GM12878 (cell line): ENCODE measurements at regions of chr3 and their contacts with region 1.

Region 1: GRCh38 chr3:122679085-122679881 is 1.4 kb upstream of the PARP14 start:
- DNase-seq: no peak
- ATAC-seq: peak; percentile 70
- H3K4me3 ChIP-seq: peak overlapping the region; percentile 97
- H3K27ac ChIP-seq: peak overlapping the region; percentile 97
- H3K4me1 ChIP-seq: peaks cover 16% of the 10 kb centered on the region
- H3K27me3 ChIP-seq: no peaks in the 10 kb centered on the region
- CTCF ChIP-seq: peak; percentile 75 to 91 (median 80)
- EP300 ChIP-seq: peak in 1 of 2 experiments; percentile 6; a peak in 1 of 4 replicates
- POLR2A ChIP-seq: no peak
- RAD21 ChIP-seq: peak; percentile 95

Region 2: GRCh38 chr3:121545574-121546455 is 1133.5 kb before region 1 on chr3 and contains the start of gene POLQ:
- CTCF ChIA-PET with region 1: no interaction called
- POLR2A ChIA-PET with region 1: no interaction called
- RAD21 ChIA-PET with region 1: interaction called, 9 read pairs
- SMC1A ChIA-PET with region 1: no interaction called
- in situ Hi-C with region 1: loop called (anchors 5 kb)
- intact Hi-C with region 1: loop called (anchors 2 kb)
- DNase-seq: peak; percentile 77
- ATAC-seq: peak; percentile 82
- H3K4me3 ChIP-seq: peak within 1 kb of the TSS; percentile 76
- H3K27ac ChIP-seq: peak within 1 kb of the TSS; percentile 84
- H3K4me1 ChIP-seq: peaks cover 16% of the 10 kb centered on the region
- H3K27me3 ChIP-seq: no peaks in the 10 kb centered on the region
- CTCF ChIP-seq: no peak
- EP300 ChIP-seq: 0 out of 4 replicates have a peak, but pooled peaks of 1 of the 2 experiments have one; percentile 18
- POLR2A ChIP-seq: peak; percentile 83
- RAD21 ChIP-seq: no peak
- polyA plus RNA-seq, gene POLQ: 3.3 to 3.4 TPM

Region 3: GRCh38 chr3:122392868-122393844 is 286.1 kb before region 1 on chr3:
- CTCF ChIA-PET with region 1: interaction called, 37 read pairs
- POLR2A ChIA-PET with region 1: interaction called, 4 read pairs
- RAD21 ChIA-PET with region 1: interaction called, 19 read pairs
- SMC1A ChIA-PET with region 1: interaction called, 15 read pairs
- in situ Hi-C with region 1: no loop called
- intact Hi-C with region 1: loop called (anchors 1 kb)
- DNase-seq: no peak
- ATAC-seq: peak; percentile 59
- H3K4me3 ChIP-seq: no peak overlapping the region
- H3K27ac ChIP-seq: no peak overlapping the region
- H3K4me1 ChIP-seq: no peaks in the 10 kb centered on the region; the same call in 1 of the 2 replicates
- H3K27me3 ChIP-seq: no peaks in the 10 kb centered on the region
- CTCF ChIP-seq: peak; percentile 52 to 77 (median 75); a peak in 5 of 6 replicates
- EP300 ChIP-seq: no peak
- POLR2A ChIP-seq: no peak
- RAD21 ChIP-seq: peak; percentile 88

Region 4: GRCh38 chr3:122468896-122469533 is 210.3 kb before region 1 on chr3:
- CTCF ChIA-PET with region 1: interaction called, 9 read pairs
- POLR2A ChIA-PET with region 1: interaction called, 3 read pairs
- RAD21 ChIA-PET with region 1: interaction called, 4 read pairs
- SMC1A ChIA-PET with region 1: interaction called, 12 read pairs
- in situ Hi-C with region 1: no loop called
- intact Hi-C with region 1: loop called (anchors 5 kb)
- DNase-seq: peak; percentile 30
- ATAC-seq: peak; percentile 88
- H3K4me3 ChIP-seq: no peak overlapping the region
- H3K27ac ChIP-seq: peak overlapping the region; percentile 53
- H3K4me1 ChIP-seq: peaks cover 16% of the 10 kb centered on the region
- H3K27me3 ChIP-seq: no peaks in the 10 kb centered on the region
- CTCF ChIP-seq: no peak
- EP300 ChIP-seq: no peak; a peak in 1 of 4 replicates
- POLR2A ChIP-seq: no peak
- RAD21 ChIP-seq: no peak

Region 5: DNA sequence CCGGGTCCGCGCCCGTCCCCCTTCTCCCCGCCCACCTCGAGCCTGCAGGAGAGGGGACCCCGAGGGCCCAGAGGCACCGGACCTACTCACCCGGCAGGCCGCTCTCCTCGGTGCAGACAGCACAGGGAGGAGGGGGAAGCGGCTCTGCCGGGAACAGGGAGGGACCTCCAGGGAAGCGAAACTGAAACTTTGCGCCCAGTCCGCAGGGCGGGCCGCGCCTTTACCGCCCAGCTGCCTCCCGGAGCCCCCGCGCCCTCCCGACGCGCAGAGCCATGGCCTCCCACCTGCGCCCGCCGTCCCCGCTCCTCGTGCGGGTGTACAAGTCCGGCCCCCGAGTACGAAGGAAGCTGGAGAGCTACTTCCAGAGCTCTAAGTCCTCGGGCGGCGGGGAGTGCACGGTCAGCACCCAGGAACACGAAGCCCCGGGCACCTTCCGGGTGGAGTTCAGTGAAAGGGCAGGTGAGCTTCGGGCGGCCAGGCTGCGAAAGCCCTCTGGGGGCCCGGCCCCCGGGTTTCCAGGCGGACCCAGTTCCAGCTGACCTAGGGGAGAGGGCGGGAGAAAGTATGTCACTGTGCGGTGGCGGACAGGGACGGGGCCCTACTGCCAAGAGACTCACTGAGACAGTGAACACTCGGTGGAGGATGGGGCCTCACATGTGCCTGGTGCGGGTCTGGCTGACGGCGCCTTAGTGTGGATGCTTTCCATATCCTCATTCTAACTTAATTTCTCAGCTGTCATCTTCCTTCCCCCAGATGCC is 114.9 kb before region 1 on chr3 and contains the starts of genes DTX3L and PARP9:
- CTCF ChIA-PET with region 1: interaction called, 192 read pairs
- POLR2A ChIA-PET with region 1: interaction called, 65 read pairs
- RAD21 ChIA-PET with region 1: interaction called, 236 read pairs
- SMC1A ChIA-PET with region 1: interaction called, 250 read pairs
- in situ Hi-C with region 1: loop called (anchors 5 kb)
- intact Hi-C with region 1: loop called (anchors 1 kb)
- DNase-seq: no peak
- ATAC-seq: peak; percentile 82
- H3K4me3 ChIP-seq: peak within 1 kb of the TSS; percentile 57
- H3K27ac ChIP-seq: peak within 1 kb of the TSS; percentile 82
- H3K4me1 ChIP-seq: peaks cover 4% of the 10 kb centered on the region; the same call in 1 of the 2 replicates
- H3K27me3 ChIP-seq: no peaks in the 10 kb centered on the region
- CTCF ChIP-seq: no peak
- EP300 ChIP-seq: no peak
- POLR2A ChIP-seq: peak; percentile 83
- RAD21 ChIP-seq: no peak
- polyA plus RNA-seq, gene DTX3L: 9.9 to 14.6 TPM
- polyA plus RNA-seq, gene PARP9: 34.0 to 40.4 TPM

Region 6: GRCh38 chr3:122621112-122621511 is 58.2 kb before region 1 on chr3:
- CTCF ChIA-PET with region 1: interaction called, 91 read pairs
- POLR2A ChIA-PET with region 1: interaction called, 67 read pairs
- RAD21 ChIA-PET with region 1: interaction called, 120 read pairs
- SMC1A ChIA-PET with region 1: interaction called, 113 read pairs
- in situ Hi-C with region 1: no loop called
- intact Hi-C with region 1: loop called (anchors 2 kb)
- DNase-seq: peak; percentile 66
- ATAC-seq: peak; percentile 63
- H3K4me3 ChIP-seq: peak overlapping the region; percentile 39; the same call in 1 of the 2 replicates
- H3K27ac ChIP-seq: peak overlapping the region; percentile 47; the same call in 1 of the 2 replicates
- H3K4me1 ChIP-seq: peaks cover 24% of the 10 kb centered on the region
- H3K27me3 ChIP-seq: no peaks in the 10 kb centered on the region
- CTCF ChIP-seq: no peak
- EP300 ChIP-seq: peak; percentile 55 to 64; a peak in 2 of 4 replicates
- POLR2A ChIP-seq: no peak
- RAD21 ChIP-seq: no peak

Region 7: DNA sequence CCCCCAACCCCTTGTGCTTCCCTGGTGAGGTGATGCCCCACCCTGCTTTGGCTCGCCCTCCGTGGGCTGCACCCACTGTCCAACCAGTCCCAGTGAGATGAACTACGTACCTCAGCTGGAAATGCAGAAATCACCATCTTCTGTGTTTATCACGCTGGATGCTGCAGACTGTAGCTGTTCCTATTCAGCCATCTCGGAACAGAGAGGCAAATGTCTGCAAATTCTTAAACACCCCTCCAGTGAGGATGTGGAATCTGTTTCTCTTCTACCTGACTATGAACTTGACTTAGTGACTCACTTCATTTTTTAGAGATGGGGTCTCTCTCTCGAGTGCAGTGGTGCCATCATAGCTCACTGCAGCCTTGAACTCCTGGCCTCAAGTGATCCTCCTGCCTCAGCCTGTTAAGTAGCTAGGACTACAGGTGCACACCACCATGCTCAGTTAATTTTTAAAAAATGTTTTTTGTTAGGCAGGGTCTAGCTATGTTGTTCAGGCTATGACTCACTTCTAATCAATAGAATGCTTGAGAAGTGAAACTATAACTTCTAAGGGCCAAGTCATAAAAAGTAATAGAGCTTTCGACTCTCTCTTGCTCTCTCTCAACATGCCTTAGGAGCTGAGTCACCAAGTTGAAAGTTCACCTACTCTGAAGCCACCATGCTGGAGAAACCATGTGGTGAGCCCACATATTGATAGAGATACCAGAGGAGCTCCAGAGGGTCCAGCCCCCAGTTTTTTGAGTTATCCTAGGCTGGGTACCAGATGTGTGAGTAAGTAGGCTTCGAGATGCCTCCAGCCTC is 10.2 kb before region 1 on chr3:
- CTCF ChIA-PET with region 1: interaction called, 11 read pairs
- POLR2A ChIA-PET with region 1: interaction called, 11 read pairs
- RAD21 ChIA-PET with region 1: interaction called, 15 read pairs
- SMC1A ChIA-PET with region 1: interaction called, 13 read pairs
- in situ Hi-C with region 1: no loop called
- intact Hi-C with region 1: no loop called
- DNase-seq: no peak
- ATAC-seq: peak; percentile 97
- H3K4me3 ChIP-seq: no peak overlapping the region
- H3K27ac ChIP-seq: peak overlapping the region; percentile 41; the same call in 1 of the 2 replicates
- H3K4me1 ChIP-seq: peaks cover 12% of the 10 kb centered on the region
- H3K27me3 ChIP-seq: no peaks in the 10 kb centered on the region
- CTCF ChIP-seq: no peak
- EP300 ChIP-seq: no peak
- POLR2A ChIP-seq: no peak
- RAD21 ChIP-seq: no peak